ENCODE measurements at regions of chr1 and their contacts with region 1.

Region 1: GRCh38 chr1:247407180-247407616 is 8.8 kb upstream of the NLRP3 start:
- DNase-seq: peak; percentile 99 to 100 (median 99)
- H3K4me3 ChIP-seq: peak overlapping the region in 2 of 3 experiments; percentile 22 to 60
- H3K4me3 Mint-ChIP-seq: peak overlapping the region; percentile 60 to 67
- H3K27ac ChIP-seq: peak overlapping the region; percentile 99 to 100
- H3K27ac Mint-ChIP-seq: peak overlapping the region; percentile 98 to 100 (median 99)
- H3K4me1 ChIP-seq: peaks cover 87 to 90% of the 10 kb centered on the region in 2 donors
- H3K4me1 Mint-ChIP-seq: peaks cover 79% of the 10 kb centered on the region
- H3K27me3 ChIP-seq: no peaks in the 10 kb centered on the region
- H3K27me3 Mint-ChIP-seq: peaks cover 0 to 2% (median 0%) of the 10 kb centered on the region in 3 donors
- CTCF ChIP-seq: no peak

Region 2: GRCh38 chr1:247347477-247348222 is 59.5 kb before region 1 on chr1:
- intact Hi-C with region 1: no loop called
- DNase-seq: peak in 2 of 3 donors; percentile 19 to 31
- H3K4me3 ChIP-seq: peak overlapping the region; percentile 39 to 73 (median 44)
- H3K4me3 Mint-ChIP-seq: peak overlapping the region; percentile 76 to 85
- H3K27ac ChIP-seq: no peak overlapping the region
- H3K27ac Mint-ChIP-seq: peak overlapping the region in 1 of 7 donors; percentile 11
- H3K4me1 ChIP-seq: peaks cover 12 to 19% of the 10 kb centered on the region in 2 donors
- H3K4me1 Mint-ChIP-seq: peaks cover 21% of the 10 kb centered on the region
- H3K27me3 ChIP-seq: peaks cover 0 to 7% of the 10 kb centered on the region in 2 donors
- H3K27me3 Mint-ChIP-seq: peaks cover 6 to 15% (median 11%) of the 10 kb centered on the region in 3 donors
- CTCF ChIP-seq: no peak

Region 3: GRCh38 chr1:247390116-247390791 is 16.9 kb before region 1 on chr1:
- intact Hi-C with region 1: loop called in 1 of 2 experiments (anchors 2 kb)
- DNase-seq: peak; percentile 92 to 99 (median 98)
- H3K4me3 ChIP-seq: peak overlapping the region; percentile 18 to 66 (median 33)
- H3K4me3 Mint-ChIP-seq: peak overlapping the region; percentile 71 to 91
- H3K27ac ChIP-seq: peak overlapping the region; percentile 84 to 85
- H3K27ac Mint-ChIP-seq: peak overlapping the region; percentile 94 to 99 (median 95)
- H3K4me1 ChIP-seq: peaks cover 51 to 57% of the 10 kb centered on the region in 2 donors
- H3K4me1 Mint-ChIP-seq: peaks cover 52% of the 10 kb centered on the region
- H3K27me3 ChIP-seq: no peaks in the 10 kb centered on the region
- H3K27me3 Mint-ChIP-seq: peaks cover 0 to 3% (median 0%) of the 10 kb centered on the region in 3 donors
- CTCF ChIP-seq: peak; percentile 96

Region 4: GRCh38 chr1:247440001-247440620 is 32.9 kb after region 1 on chr1:
- intact Hi-C with region 1: loop called (anchors 2 to 5 kb)
- DNase-seq: peak; percentile 82 to 90 (median 87)
- H3K4me3 ChIP-seq: no peak overlapping the region
- H3K4me3 Mint-ChIP-seq: peak overlapping the region in 1 of 2 donors; percentile 6
- H3K27ac ChIP-seq: peak overlapping the region; percentile 86 to 89
- H3K27ac Mint-ChIP-seq: peak overlapping the region; percentile 95 to 100 (median 98)
- H3K4me1 ChIP-seq: peaks cover 81 to 86% of the 10 kb centered on the region in 2 donors
- H3K4me1 Mint-ChIP-seq: peaks cover 91% of the 10 kb centered on the region
- H3K27me3 ChIP-seq: no peaks in the 10 kb centered on the region
- H3K27me3 Mint-ChIP-seq: peaks cover 0 to 5% (median 0%) of the 10 kb centered on the region in 3 donors
- CTCF ChIP-seq: no peak

Region 5: DNA sequence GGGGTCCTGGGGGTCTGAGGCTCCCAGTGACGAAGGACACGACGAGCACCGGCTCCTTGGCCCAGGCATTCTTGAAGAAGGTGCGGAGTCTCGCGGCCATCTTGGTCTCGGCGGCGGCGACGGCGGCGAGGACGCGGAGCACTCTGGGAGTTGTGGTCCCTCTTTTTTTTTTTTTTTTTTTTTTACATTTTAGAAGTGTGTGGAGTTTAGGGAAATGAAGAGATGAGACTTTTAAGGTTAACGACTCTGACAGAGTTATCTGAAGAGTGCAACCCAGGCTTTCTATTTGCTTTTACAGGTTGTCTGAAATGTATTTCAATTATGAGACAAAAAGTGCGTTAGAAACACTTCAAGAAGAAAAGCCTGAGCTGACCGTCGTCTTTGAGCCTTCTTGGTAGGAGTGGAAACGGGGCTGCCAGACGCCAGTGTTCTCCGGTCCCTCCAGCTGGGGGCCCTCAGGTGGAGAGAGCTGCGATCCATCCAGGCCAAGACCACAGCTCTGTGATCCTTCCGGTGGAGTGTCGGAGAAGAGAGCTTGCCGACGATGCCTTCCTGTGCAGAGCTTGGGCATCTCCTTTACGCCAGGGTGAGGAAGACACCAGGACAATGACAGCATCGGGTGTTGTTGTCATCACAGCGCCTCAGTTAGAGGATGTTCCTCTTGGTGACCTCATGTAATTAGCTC is 41.1 kb after region 1 on chr1:
- intact Hi-C with region 1: loop called in 1 of 2 experiments (anchors 5 kb)
- DNase-seq: peak in 1 of 3 donors; percentile 69
- H3K4me3 ChIP-seq: no peak overlapping the region
- H3K4me3 Mint-ChIP-seq: no peak overlapping the region
- H3K27ac ChIP-seq: no peak overlapping the region
- H3K27ac Mint-ChIP-seq: peak overlapping the region; percentile 44 to 99 (median 85)
- H3K4me1 ChIP-seq: peaks cover 39 to 52% of the 10 kb centered on the region in 2 donors
- H3K4me1 Mint-ChIP-seq: peaks cover 73% of the 10 kb centered on the region
- H3K27me3 ChIP-seq: no peaks in the 10 kb centered on the region
- H3K27me3 Mint-ChIP-seq: no peaks in the 10 kb centered on the region
- CTCF ChIP-seq: no peak

Measured in CD14-positive monocyte (primary cell).